Panc1 (cell line): ENCODE measurements at regions of chr10 and their contacts with region 1.

Region 1: DNA sequence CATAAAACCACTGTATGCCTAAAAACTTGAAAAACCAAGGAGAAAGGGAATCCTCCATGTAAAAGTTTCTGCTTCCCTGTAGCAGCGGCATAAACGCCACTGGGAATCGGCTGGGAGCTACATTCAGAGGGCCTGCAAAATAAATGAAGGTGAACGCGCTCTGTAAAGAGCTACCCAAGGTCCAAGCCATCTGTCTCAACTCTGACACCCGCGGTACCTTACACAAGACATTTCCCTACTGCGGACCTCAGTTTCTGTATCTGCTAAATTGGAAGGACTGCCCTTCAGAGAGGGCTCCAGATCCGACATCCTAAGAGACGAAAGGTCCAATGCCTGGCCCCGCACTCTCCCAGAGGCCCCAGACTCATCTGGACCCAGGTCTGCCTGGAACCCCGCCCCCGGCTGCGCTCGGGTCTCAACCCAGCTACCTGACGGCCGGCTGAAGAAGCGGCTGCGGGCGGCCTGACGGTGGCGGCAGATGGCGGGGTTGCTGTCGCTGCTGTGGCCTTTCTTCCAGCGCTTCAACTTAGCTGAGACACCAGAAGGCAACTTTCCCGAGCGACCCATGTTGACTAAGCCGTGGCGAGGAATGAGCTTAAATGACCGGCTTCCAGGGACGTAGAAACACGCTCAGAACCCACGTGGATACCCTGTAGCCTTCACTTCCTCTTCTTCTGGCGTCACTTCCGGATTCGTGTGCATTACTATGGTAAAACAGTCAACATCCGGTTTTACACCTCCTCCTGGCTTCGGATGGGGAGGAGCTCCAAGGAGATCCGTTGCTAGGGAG is at the start of gene RRP12:
- DNase-seq: peak; percentile 96
- ATAC-seq: peak; percentile 98
- H3K4me3 ChIP-seq: peak within 1 kb of the TSS; percentile 72 to 100
- H3K27ac ChIP-seq: peak within 1 kb of the TSS; percentile 76
- H3K4me1 ChIP-seq: no peaks in the 10 kb centered on the region
- H3K27me3 ChIP-seq: no peaks in the 10 kb centered on the region
- CTCF ChIP-seq: no peak
- total RNA-seq, gene RRP12: 94.9 TPM

Region 2: GRCh38 chr10:97388152-97388551 is 12.7 kb before region 1 on chr10:
- CTCF ChIA-PET with region 1: interaction called, 14 read pairs
- POLR2A ChIA-PET with region 1: no interaction called
- in situ Hi-C with region 1: no loop called
- intact Hi-C with region 1: no loop called
- DNase-seq: no peak
- ATAC-seq: peak; percentile 21; the same call in 1 of the 2 replicates
- H3K4me3 ChIP-seq: no peak overlapping the region
- H3K27ac ChIP-seq: no peak overlapping the region
- H3K4me1 ChIP-seq: no peaks in the 10 kb centered on the region
- H3K27me3 ChIP-seq: no peaks in the 10 kb centered on the region
- CTCF ChIP-seq: no peak

Region 3: DNA sequence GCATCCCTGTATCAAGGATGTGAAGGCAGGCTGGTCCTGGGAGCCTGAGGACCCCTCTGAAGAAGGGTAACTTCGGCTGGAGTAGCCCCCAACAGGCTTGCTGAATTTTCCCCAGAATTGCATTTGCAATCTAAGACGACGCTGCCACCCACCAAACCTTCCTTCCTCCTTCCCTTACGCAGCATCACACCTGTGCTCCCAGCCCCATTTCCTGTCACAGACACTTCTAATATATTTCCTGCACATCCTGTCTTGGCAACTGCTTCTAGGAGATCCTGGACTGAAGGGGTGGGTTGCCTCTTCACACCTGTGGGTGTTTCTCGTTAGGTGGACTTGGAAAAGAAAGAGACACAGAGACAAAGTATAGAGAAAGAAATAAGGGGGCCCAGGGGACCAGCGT is 15.7 kb after region 1 on chr10:
- CTCF ChIA-PET with region 1: interaction called, 11 read pairs
- POLR2A ChIA-PET with region 1: interaction called, 8 read pairs
- in situ Hi-C with region 1: no loop called
- intact Hi-C with region 1: no loop called
- DNase-seq: no peak
- ATAC-seq: no peak
- H3K4me3 ChIP-seq: no peak overlapping the region
- H3K27ac ChIP-seq: no peak overlapping the region
- H3K4me1 ChIP-seq: peaks cover 11% of the 10 kb centered on the region
- H3K27me3 ChIP-seq: no peaks in the 10 kb centered on the region
- CTCF ChIP-seq: no peak

Region 4: GRCh38 chr10:97553575-97554031 is 152.7 kb after region 1 on chr10:
- CTCF ChIA-PET with region 1: interaction called, 11 read pairs
- POLR2A ChIA-PET with region 1: no interaction called
- in situ Hi-C with region 1: no loop called
- intact Hi-C with region 1: no loop called
- DNase-seq: no peak
- ATAC-seq: peak; percentile 95
- H3K4me3 ChIP-seq: no peak overlapping the region
- H3K27ac ChIP-seq: peak overlapping the region; percentile 76
- H3K4me1 ChIP-seq: peaks cover 26% of the 10 kb centered on the region
- H3K27me3 ChIP-seq: no peaks in the 10 kb centered on the region
- CTCF ChIP-seq: peak; percentile 99